CD4-positive, alpha-beta memory T cell (primary cell): ENCODE measurements at regions of chr16 and their contacts with region 1.

Region 1: GRCh38 chr16:46673320-46674013 is 15.5 kb downstream of the VPS35 start:
- DNase-seq: peak; percentile 44 to 63 (median 47)
- H3K4me3 ChIP-seq: no peak overlapping the region
- H3K4me3 Mint-ChIP-seq: no peak overlapping the region
- H3K27ac ChIP-seq: no peak overlapping the region
- H3K27ac Mint-ChIP-seq: peak overlapping the region in 1 of 7 donors; percentile 35
- H3K4me1 ChIP-seq: no peaks in the 10 kb centered on the region
- H3K4me1 Mint-ChIP-seq: peaks cover 0 to 4% (median 2%) of the 10 kb centered on the region in 4 donors
- H3K27me3 ChIP-seq: no peaks in the 10 kb centered on the region
- H3K27me3 Mint-ChIP-seq: no peaks in the 10 kb centered on the region

Region 2: DNA sequence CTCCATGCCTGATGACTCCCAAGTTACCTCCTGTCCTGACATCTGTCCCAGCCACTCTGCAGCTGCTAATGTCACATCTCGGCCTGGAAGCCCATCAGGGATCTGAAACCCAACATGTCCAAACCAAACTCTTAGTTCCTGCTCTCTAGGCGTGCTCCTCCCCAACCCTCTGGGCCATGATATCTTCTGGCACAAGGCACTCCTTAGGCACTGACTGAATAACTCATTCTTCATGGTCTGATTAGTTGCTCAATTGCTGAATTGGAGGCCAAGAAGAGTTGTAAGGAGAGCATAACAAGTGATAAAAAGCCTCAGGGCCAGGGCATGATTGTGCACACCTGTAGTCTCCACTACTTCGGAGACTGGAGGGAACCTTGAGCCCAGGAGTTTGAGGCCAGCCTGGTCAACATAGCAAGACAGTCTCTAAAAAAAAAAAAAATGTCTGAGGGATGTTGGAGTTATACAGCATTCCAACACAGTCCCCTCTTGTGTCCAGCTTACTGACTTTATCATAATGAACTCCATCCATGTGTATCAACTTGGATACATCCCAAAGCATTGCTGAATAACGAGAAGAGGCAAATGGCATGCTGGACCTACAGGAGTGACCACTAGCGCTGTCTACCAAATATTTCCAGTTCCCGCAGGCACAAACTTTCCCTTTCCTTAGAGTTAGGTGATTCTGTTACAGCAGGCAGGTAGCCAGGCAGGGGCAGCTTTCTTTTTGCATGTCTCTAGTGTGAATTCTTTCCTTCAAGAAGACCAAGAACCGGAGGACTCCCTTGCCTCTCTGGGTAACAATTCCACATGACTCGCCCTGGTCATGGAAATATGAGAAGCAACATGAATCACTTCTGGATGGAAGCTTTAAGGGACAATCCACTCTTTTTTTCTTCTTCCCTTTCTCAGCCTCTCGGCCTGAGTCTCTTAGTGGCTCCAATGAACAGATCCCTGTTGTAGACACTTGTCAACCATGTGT is 34.2 kb before region 1 on chr16:
- CTCF ChIA-PET with region 1: no interaction called
- POLR2A ChIA-PET with region 1: no interaction called
- intact Hi-C with region 1: no loop called
- DNase-seq: no peak
- H3K4me3 ChIP-seq: no peak overlapping the region
- H3K4me3 Mint-ChIP-seq: no peak overlapping the region
- H3K27ac ChIP-seq: no peak overlapping the region
- H3K27ac Mint-ChIP-seq: peak overlapping the region in 1 of 7 donors; percentile 27
- H3K4me1 ChIP-seq: no peaks in the 10 kb centered on the region
- H3K4me1 Mint-ChIP-seq: peaks cover 0 to 2% (median 0%) of the 10 kb centered on the region in 4 donors
- H3K27me3 ChIP-seq: no peaks in the 10 kb centered on the region
- H3K27me3 Mint-ChIP-seq: no peaks in the 10 kb centered on the region

Region 3: GRCh38 chr16:46790599-46791270 is 117.3 kb after region 1 on chr16:
- CTCF ChIA-PET with region 1: no interaction called
- POLR2A ChIA-PET with region 1: no interaction called
- intact Hi-C with region 1: no loop called
- DNase-seq: no peak
- H3K4me3 ChIP-seq: peak overlapping the region in 1 of 2 donors; percentile 76
- H3K4me3 Mint-ChIP-seq: peak overlapping the region; percentile 79 to 90 (median 85)
- H3K27ac ChIP-seq: no peak overlapping the region
- H3K27ac Mint-ChIP-seq: peak overlapping the region in 6 of 7 donors; percentile 28 to 88 (median 72)
- H3K4me1 ChIP-seq: peaks cover 8% of the 10 kb centered on the region
- H3K4me1 Mint-ChIP-seq: peaks cover 15 to 20% (median 17%) of the 10 kb centered on the region in 4 donors
- H3K27me3 ChIP-seq: no peaks in the 10 kb centered on the region
- H3K27me3 Mint-ChIP-seq: no peaks in the 10 kb centered on the region

Region 4: DNA sequence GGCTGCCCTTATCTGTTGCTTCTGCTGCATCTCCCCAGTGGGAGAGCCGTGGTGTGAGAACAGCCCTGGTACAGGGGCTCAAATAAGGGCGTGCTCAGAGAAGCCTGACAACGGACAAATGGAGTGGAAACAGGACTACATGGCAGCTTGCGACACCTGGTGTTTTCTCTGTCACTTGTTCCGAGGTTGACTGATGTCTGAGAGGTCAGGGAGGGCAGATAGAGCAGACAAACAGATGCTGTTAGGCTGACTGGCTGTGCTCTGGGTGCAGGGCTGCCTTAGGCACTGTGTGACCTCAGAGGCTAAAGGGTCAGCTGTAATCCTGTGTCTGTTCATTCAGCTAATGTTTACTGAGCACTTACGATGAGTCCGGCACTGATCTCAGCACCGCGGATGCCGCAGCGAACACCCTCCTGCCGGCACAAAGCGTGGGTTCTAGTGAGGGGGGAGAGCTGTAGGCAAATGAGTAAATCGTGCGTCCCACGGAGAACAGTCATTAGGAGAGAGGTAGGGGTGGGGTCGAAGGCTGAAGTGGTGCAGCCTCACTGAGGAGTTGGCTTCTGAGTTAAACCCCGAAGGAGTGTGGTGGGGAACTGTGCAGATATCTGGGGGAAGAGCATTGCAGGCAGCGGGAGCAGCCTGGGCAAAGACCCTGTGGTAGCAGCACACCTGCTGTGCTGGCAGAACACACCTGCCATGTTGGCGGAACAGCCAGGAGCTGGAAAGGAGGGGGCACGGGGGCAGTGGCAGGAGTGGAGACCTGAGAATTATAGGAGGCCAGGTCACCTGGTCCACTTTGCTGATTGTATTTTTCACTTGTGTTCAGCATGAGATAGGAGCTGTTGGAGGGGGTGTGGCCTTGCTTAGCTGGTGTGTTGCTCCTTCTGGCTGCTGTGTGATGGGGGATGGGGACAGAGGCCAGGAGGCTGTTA is 245.7 kb after region 1 on chr16:
- CTCF ChIA-PET with region 1: interaction called, 19 read pairs
- POLR2A ChIA-PET with region 1: interaction called, 4 read pairs
- intact Hi-C with region 1: no loop called
- DNase-seq: no peak
- H3K4me3 ChIP-seq: no peak overlapping the region
- H3K4me3 Mint-ChIP-seq: peak overlapping the region in 7 of 8 donors; percentile 1 to 55 (median 32)
- H3K27ac ChIP-seq: no peak overlapping the region
- H3K27ac Mint-ChIP-seq: peak overlapping the region in 1 of 7 donors; percentile 48
- H3K4me1 ChIP-seq: no peaks in the 10 kb centered on the region
- H3K4me1 Mint-ChIP-seq: peaks cover 0 to 3% (median 0%) of the 10 kb centered on the region in 4 donors
- H3K27me3 ChIP-seq: no peaks in the 10 kb centered on the region
- H3K27me3 Mint-ChIP-seq: no peaks in the 10 kb centered on the region